ENCODE measurements at regions of chr1 and their contacts with region 1.

Region 1: GRCh38 chr1:151838222-151839081 is 1.2 kb downstream of the C2CD4D start:
- DNase-seq: peak; percentile 73
- CTCF ChIP-seq: no peak

Region 2: GRCh38 chr1:151594143-151594625 is 244.3 kb before region 1 on chr1:
- CTCF ChIA-PET with region 1: interaction called, 15 read pairs
- POLR2A ChIA-PET with region 1: no interaction called
- DNase-seq: peak; percentile 86
- CTCF ChIP-seq: peak; percentile 94

Region 3: GRCh38 chr1:151790071-151790940 is 48.1 kb before region 1 on chr1 and contains the start of gene TDRKH:
- CTCF ChIA-PET with region 1: interaction called, 10 read pairs
- POLR2A ChIA-PET with region 1: no interaction called
- DNase-seq: peak; percentile 99
- CTCF ChIP-seq: peak; percentile 46

Region 4: GRCh38 chr1:151820940-151821339 is 17.5 kb before region 1 on chr1:
- CTCF ChIA-PET with region 1: interaction called, 13 read pairs
- POLR2A ChIA-PET with region 1: no interaction called
- DNase-seq: no peak
- CTCF ChIP-seq: no peak

Region 5: GRCh38 chr1:151898513-151898991 is 60.1 kb after region 1 on chr1:
- CTCF ChIA-PET with region 1: no interaction called
- POLR2A ChIA-PET with region 1: no interaction called
- DNase-seq: no peak
- CTCF ChIP-seq: no peak

Region 6: GRCh38 chr1:152170287-152170905 is 331.9 kb after region 1 on chr1:
- CTCF ChIA-PET with region 1: no interaction called
- POLR2A ChIA-PET with region 1: no interaction called
- DNase-seq: no peak
- CTCF ChIP-seq: no peak